Mammary epithelial cell (primary cell): ENCODE measurements at regions of chr2 and their contacts with region 1.

Region 1: GRCh38 chr2:180125245-180125962 is 118.3 kb upstream of the CWC22 start:
- DNase-seq: peak; percentile 94
- H3K4me3 ChIP-seq: no peak overlapping the region
- H3K27ac ChIP-seq: no peak overlapping the region
- H3K4me1 ChIP-seq: peaks cover 29% of the 10 kb centered on the region
- H3K27me3 ChIP-seq: no peaks in the 10 kb centered on the region
- CTCF ChIP-seq: peak; percentile 70 to 77

Region 2: GRCh38 chr2:180481998-180482397 is 356.6 kb after region 1 on chr2:
- CTCF ChIA-PET with region 1: no interaction called
- dilution Hi-C with region 1: no loop called
- in situ Hi-C with region 1: loop called in 1 of 2 experiments (anchors 10 kb)
- intact Hi-C with region 1: loop called (anchors 2 kb)
- DNase-seq: no peak
- H3K4me3 ChIP-seq: no peak overlapping the region
- H3K27ac ChIP-seq: no peak overlapping the region
- H3K4me1 ChIP-seq: no peaks in the 10 kb centered on the region
- H3K27me3 ChIP-seq: no peaks in the 10 kb centered on the region
- CTCF ChIP-seq: no peak

Region 3: GRCh38 chr2:180656455-180656847 is 531.0 kb after region 1 on chr2:
- CTCF ChIA-PET with region 1: interaction called, 5 read pairs
- dilution Hi-C with region 1: no loop called
- in situ Hi-C with region 1: no loop called
- intact Hi-C with region 1: loop called (anchors 10 kb)
- DNase-seq: peak; percentile 93
- H3K4me3 ChIP-seq: no peak overlapping the region
- H3K27ac ChIP-seq: no peak overlapping the region
- H3K4me1 ChIP-seq: peaks cover 24% of the 10 kb centered on the region
- H3K27me3 ChIP-seq: no peaks in the 10 kb centered on the region
- CTCF ChIP-seq: no peak

Region 4: GRCh38 chr2:181058378-181059269 is 933.2 kb after region 1 on chr2:
- CTCF ChIA-PET with region 1: no interaction called
- dilution Hi-C with region 1: no loop called
- in situ Hi-C with region 1: loop called (anchors 10 kb)
- intact Hi-C with region 1: loop called (anchors 1 kb)
- DNase-seq: peak; percentile 31
- H3K4me3 ChIP-seq: no peak overlapping the region
- H3K27ac ChIP-seq: no peak overlapping the region
- H3K4me1 ChIP-seq: peaks cover 7% of the 10 kb centered on the region
- H3K27me3 ChIP-seq: no peaks in the 10 kb centered on the region
- CTCF ChIP-seq: peak; percentile 70 to 74

Region 5: GRCh38 chr2:181466661-181467576 is 1341.5 kb after region 1 on chr2:
- CTCF ChIA-PET with region 1: no interaction called
- dilution Hi-C with region 1: no loop called
- in situ Hi-C with region 1: loop called (anchors 25 kb)
- intact Hi-C with region 1: loop called (anchors 1 kb)
- DNase-seq: peak; percentile 25
- H3K4me3 ChIP-seq: no peak overlapping the region
- H3K27ac ChIP-seq: peak overlapping the region; percentile 66
- H3K4me1 ChIP-seq: peaks cover 10% of the 10 kb centered on the region
- H3K27me3 ChIP-seq: no peaks in the 10 kb centered on the region
- CTCF ChIP-seq: peak; percentile 84 to 85

Region 6: GRCh38 chr2:181715033-181715630 is 1589.7 kb after region 1 on chr2:
- CTCF ChIA-PET with region 1: no interaction called
- dilution Hi-C with region 1: no loop called
- in situ Hi-C with region 1: loop called (anchors 10 to 25 kb)
- intact Hi-C with region 1: loop called (anchors 1 kb)
- DNase-seq: peak; percentile 63
- H3K4me3 ChIP-seq: no peak overlapping the region
- H3K27ac ChIP-seq: no peak overlapping the region
- H3K4me1 ChIP-seq: no peaks in the 10 kb centered on the region
- H3K27me3 ChIP-seq: peaks cover 2% of the 10 kb centered on the region
- CTCF ChIP-seq: peak; percentile 66 to 69